Spleen (tissue), 13 donors: ENCODE measurements at regions of chr20 and their contacts with region 1.

Region 1: GRCh38 chr20:45798935-45799642 is 7.3 kb downstream of the DNTTIP1 start:
- DNase-seq: no peak
- H3K4me3 ChIP-seq: no peak overlapping the region
- H3K27ac ChIP-seq: peak overlapping the region in 4 of 8 donors; percentile 27 to 56 (median 44)
- H3K4me1 ChIP-seq: peaks cover 0 to 20% (median 11%) of the 10 kb centered on the region in 6 donors
- H3K27me3 ChIP-seq: no peaks in the 10 kb centered on the region
- CTCF ChIP-seq: peak; percentile 11 to 83 (median 68)
- POLR2A ChIP-seq: no peak

Region 2: DNA sequence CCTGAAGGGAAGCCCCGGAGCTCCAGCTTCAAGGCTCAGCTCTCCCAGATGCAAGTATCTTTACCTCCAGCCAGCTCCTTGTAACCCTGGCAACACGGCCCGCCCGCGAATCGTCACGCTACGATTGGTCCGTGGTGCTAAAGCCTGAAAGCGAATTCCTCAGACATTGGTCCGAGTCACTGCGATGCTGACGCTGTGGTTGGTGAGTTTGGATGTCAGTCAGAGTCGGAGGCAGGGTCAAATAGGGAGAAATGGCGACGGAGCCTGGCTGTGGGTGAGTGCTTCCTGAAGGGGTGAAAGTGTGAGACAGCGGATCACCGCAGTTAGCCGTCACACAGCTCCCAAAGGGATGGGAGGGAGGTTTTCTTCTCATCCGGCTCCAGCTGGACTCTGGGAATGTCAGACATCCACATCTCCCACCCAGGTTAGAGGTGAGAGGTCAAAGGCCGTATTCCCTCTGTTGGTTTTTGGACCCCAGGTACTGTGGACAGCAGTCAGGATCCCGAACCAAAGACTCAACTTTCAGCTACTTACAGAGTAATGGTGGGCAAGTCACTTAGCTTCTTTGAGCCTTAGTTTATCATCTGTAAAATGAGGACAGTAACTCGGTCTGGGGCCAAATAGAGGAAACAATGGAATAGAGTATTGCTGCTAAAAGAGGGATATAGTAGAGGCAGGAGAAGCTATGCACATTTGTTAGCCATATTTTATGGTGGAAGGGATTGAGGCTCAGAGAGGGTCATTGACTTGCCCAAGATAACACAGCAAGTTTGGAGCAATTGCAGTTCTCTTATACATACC is 82.1 kb after region 1 on chr20 and contains the start of gene ZSWIM1:
- intact Hi-C with region 1: loop called (anchors 10 kb)
- DNase-seq: peak; percentile 99
- H3K4me3 ChIP-seq: peak within 1 kb of the TSS; percentile 45 to 83 (median 54)
- H3K27ac ChIP-seq: peak within 1 kb of the TSS; percentile 62 to 92 (median 83)
- H3K4me1 ChIP-seq: peaks cover 28 to 58% (median 47%) of the 10 kb centered on the region in 6 donors
- H3K27me3 ChIP-seq: no peaks in the 10 kb centered on the region
- CTCF ChIP-seq: peak in 2 of 11 experiments; percentile 14 to 20
- POLR2A ChIP-seq: no peak
- total RNA-seq, gene ZSWIM1: 8.5 to 16.1 (median 11.1) TPM